ENCODE measurements at regions of chr22 and their contacts with region 1.

Region 1: DNA sequence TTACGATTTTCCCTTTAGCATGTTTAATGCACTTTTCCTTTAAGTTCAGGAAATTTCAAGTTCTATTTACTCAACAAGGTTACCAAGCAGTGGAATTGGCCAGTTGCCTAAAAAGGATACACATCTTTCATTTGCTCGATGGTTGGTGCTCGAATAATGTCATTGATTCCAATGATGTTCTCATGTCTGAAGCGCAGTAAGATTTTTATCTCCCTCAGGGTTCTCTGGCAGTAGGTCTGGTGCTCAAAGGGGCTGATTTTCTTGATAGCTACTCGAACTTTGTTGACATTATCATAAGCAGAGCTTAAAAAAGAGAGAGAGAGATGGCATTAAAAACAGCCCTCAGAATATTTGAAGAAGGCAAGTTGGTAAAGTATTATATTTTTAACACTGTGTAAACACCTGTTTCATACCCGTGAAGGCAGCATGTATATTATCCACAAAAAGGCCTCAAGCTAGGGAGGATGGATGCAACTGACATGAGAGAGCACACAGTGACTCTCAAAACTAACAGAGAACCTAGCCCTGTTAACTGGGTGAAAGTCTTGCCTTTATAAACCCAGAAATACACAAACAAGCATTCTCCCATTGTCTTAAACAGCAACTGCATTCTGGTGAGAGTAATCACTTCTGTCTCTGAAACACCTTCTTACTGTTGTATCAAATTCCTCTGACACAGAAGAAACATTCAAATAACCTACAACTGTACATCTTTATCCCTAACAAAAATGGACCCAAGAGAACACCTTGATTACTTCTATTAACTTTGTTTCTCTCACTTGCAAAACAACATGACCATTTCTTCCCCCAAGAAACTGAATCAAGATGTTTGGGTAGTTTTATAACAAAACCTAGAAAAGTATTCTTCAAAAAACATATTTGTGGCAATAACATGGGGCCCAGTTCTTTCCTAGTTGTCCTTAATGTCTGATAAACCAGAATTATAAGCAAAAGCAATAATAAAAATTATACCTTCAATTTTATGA is 59.6 kb downstream of the MAPK1 start:
- DNase-seq: no peak
- ATAC-seq: no peak
- H3K4me3 ChIP-seq: no peak overlapping the region
- H3K27ac ChIP-seq: no peak overlapping the region
- H3K4me1 ChIP-seq: peaks cover 4 to 11% of the 10 kb centered on the region in 2 donors
- H3K27me3 ChIP-seq: no peaks in the 10 kb centered on the region
- CTCF ChIP-seq: no peak
- POLR2A ChIP-seq: no peak

Region 2: GRCh38 chr22:21045585-21046294 is 762.1 kb before region 1 on chr22 and contains the start of gene LRRC74B:
- in situ Hi-C with region 1: no loop called
- intact Hi-C with region 1: no loop called
- DNase-seq: peak; percentile 81 to 88
- ATAC-seq: peak; percentile 77 to 82
- H3K4me3 ChIP-seq: peak within 1 kb of the TSS; percentile 55 to 78 (median 69)
- H3K27ac ChIP-seq: peak within 1 kb of the TSS; percentile 71 to 91 (median 89)
- H3K4me1 ChIP-seq: peaks cover 23 to 24% of the 10 kb centered on the region in 2 donors
- H3K27me3 ChIP-seq: no peaks in the 10 kb centered on the region
- CTCF ChIP-seq: no peak
- POLR2A ChIP-seq: no peak
- total RNA-seq, gene LRRC74B: not detected

Region 3: DNA sequence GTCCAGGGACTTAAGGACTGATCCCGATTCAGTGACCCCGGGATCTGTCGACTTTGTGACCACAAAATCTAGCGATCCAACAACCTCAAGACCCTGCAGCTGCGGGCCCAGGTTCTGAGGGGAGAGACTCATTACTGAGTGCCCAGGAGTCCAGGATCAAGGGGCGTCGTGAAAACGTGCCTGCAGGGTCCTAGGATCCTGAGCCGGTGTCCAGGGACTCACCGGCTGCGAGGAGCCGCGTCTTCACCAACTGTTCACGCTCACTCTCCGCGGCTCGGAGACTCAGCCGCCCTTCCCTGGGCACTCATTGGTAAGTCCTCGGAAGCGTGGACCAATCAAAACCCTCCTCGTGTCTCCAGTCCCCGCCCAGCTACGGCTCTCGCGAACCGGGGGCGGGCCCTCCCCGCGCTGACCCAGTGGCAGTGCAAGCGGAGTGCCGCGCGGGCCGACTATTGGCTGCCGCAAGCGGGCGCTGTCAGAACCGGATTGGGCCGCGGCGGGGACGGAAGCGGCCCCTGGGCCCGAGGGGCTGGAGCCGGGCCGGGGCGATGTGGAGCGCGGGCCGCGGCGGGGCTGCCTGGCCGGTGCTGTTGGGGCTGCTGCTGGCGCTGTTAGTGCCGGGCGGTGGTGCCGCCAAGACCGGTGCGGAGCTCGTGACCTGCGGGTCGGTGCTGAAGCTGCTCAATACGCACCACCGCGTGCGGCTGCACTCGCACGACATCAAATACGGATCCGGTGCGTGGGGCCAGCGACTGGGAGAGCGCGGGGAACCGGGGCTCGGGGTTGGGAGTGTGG is 165.9 kb before region 1 on chr22 and contains the start of gene SDF2L1:
- in situ Hi-C with region 1: no loop called
- intact Hi-C with region 1: no loop called
- DNase-seq: peak; percentile 98 to 99
- ATAC-seq: peak; percentile 97 to 98
- H3K4me3 ChIP-seq: peak within 1 kb of the TSS; percentile 73 to 97 (median 83)
- H3K27ac ChIP-seq: peak within 1 kb of the TSS; percentile 72 to 80 (median 74)
- H3K4me1 ChIP-seq: peaks cover 0 to 7% of the 10 kb centered on the region in 2 donors
- H3K27me3 ChIP-seq: no peaks in the 10 kb centered on the region
- CTCF ChIP-seq: peak in 1 of 5 experiments; percentile 41
- POLR2A ChIP-seq: peak; percentile 76 to 81
- total RNA-seq, gene SDF2L1: 8.5 to 33.2 (median 23.3) TPM

Region 4: DNA sequence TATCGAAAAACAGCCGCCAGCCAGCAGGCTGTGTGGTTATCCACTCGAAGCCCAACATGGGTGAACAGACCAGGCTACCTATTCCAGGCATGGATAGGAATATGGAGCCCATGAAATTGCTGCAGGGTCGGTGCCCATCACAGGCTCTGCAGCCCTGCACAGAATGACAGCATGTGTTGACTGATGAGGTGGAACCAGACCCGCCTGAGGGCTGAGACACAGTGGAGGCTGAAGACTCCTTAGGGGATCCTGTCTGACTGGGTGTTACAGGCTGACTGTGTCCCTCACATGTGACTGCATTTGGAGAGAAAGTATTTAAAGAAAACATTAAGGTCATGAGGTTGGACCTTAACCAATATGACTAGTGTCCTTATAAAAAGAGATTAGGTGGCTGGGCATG is 66.0 kb before region 1 on chr22:
- in situ Hi-C with region 1: loop called in 1 of 4 experiments (anchors 10 kb)
- intact Hi-C with region 1: no loop called
- DNase-seq: no peak
- ATAC-seq: no peak
- H3K4me3 ChIP-seq: no peak overlapping the region
- H3K27ac ChIP-seq: no peak overlapping the region
- H3K4me1 ChIP-seq: no peaks in the 10 kb centered on the region
- H3K27me3 ChIP-seq: no peaks in the 10 kb centered on the region
- CTCF ChIP-seq: no peak
- POLR2A ChIP-seq: no peak

Region 5: DNA sequence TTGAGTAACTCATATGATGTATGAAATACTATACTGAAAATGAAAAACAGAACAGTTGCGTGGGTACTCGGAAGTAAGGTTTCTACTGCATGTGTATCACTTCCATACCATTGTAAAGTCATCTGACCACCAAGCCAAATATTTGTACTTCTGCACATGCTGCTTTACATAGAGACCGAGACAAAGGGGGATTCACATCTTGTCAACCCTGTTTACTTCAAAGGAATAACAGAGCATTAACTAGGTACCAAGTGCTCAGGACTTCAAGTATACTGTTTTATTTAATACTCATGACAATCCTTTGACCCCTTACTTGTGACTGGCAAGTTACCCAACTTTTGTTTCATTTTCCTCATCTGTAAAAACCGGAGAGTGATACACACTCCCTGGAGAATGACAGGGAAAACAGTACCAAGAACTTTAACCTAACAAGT is 49.7 kb after region 1 on chr22:
- in situ Hi-C with region 1: loop called in 1 of 4 experiments (anchors 10 kb)
- intact Hi-C with region 1: no loop called
- DNase-seq: no peak
- ATAC-seq: peak in 1 of 2 donors; percentile 37
- H3K4me3 ChIP-seq: no peak overlapping the region
- H3K27ac ChIP-seq: peak overlapping the region; percentile 27 to 64 (median 56)
- H3K4me1 ChIP-seq: peaks cover 61 to 84% of the 10 kb centered on the region in 2 donors
- H3K27me3 ChIP-seq: no peaks in the 10 kb centered on the region
- CTCF ChIP-seq: no peak
- POLR2A ChIP-seq: no peak

Measured in gastrocnemius medialis (tissue), 4 donors.